Right cardiac atrium (tissue), 5 donors: ENCODE measurements at regions of chr17 and their contacts with region 1.

Region 1: GRCh38 chr17:55527540-55528118 is 16.4 kb upstream of the SMIM36 start:
- DNase-seq: peak in 2 of 3 donors; percentile 15 to 25
- ATAC-seq: peak; percentile 86 to 87
- H3K4me3 ChIP-seq: no peak overlapping the region
- H3K27ac ChIP-seq: no peak overlapping the region
- H3K4me1 ChIP-seq: no peaks in the 10 kb centered on the region
- H3K27me3 ChIP-seq: no peaks in the 10 kb centered on the region

Region 2: DNA sequence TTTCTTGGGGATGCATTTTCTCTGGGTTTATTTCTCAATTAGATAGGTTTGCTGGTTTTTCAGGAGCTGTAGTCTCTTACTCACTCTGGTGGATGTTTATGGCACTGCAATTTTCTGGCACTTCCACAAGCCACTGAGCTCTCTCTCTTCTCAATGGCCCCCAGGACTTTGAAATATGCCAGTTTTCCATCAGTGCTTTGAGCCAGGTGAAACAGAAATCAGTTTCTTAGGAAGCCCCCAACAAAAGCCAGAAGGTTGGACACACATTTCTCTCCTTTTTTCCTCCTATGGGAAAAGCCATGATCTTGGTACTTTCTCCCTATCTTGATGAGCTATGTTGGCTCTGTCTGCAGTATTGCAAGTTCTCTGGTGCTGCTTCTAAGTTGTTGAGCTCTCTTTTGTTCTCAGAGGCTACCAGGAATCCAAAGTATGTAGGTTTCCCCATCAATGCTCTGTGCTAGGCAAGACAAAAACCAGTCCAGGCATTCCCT is 74.3 kb after region 1 on chr17:
- intact Hi-C with region 1: loop called in 1 of 4 experiments (anchors 5 kb)
- DNase-seq: no peak
- ATAC-seq: no peak
- H3K4me3 ChIP-seq: no peak overlapping the region
- H3K27ac ChIP-seq: no peak overlapping the region
- H3K4me1 ChIP-seq: no peaks in the 10 kb centered on the region
- H3K27me3 ChIP-seq: no peaks in the 10 kb centered on the region

Region 3: GRCh38 chr17:55641676-55642081 is 114.0 kb after region 1 on chr17:
- intact Hi-C with region 1: loop called (anchors 2 to 5 kb)
- DNase-seq: peak; percentile 76 to 88 (median 79)
- ATAC-seq: peak; percentile 70 to 83
- H3K4me3 ChIP-seq: no peak overlapping the region
- H3K27ac ChIP-seq: no peak overlapping the region
- H3K4me1 ChIP-seq: peaks cover 5% of the 10 kb centered on the region
- H3K27me3 ChIP-seq: no peaks in the 10 kb centered on the region

Region 4: DNA sequence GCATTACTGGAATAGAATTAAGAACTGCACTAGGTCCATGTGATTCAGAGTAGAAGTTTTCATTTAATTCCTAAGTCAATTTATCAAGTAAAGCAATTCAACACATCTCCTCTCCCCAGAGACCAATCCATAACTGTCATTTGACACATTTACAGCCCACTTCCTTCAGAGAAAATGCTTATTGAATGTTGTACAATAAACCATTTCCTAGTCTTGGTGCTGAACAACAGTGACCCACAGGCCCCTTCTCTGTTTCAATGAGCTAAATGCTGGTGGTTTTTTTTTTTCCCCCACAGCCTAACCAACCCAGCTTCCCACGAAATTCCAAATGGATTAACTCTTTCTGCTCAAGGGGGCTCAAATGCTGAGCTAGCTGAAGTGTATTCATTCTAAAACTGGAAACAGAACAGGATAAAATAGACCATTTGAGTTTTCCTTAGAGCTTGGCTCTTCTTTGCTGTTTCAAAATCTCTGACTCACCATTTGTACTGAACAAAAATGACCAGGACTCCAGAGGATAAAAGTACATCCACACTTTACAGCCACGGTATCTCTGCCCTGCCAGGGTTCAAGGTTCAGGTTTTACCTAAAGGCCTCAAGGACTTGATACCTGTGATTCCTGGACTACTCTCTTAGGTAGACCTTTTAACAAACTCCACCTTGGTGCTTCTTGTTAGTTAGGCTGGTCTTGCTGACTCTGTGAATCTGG is 132.7 kb after region 1 on chr17:
- intact Hi-C with region 1: no loop called
- DNase-seq: no peak
- ATAC-seq: peak; percentile 50 to 68
- H3K4me3 ChIP-seq: no peak overlapping the region
- H3K27ac ChIP-seq: no peak overlapping the region
- H3K4me1 ChIP-seq: no peaks in the 10 kb centered on the region
- H3K27me3 ChIP-seq: no peaks in the 10 kb centered on the region

Region 5: GRCh38 chr17:55717898-55718735 is 190.5 kb after region 1 on chr17:
- intact Hi-C with region 1: loop called in 3 of 4 experiments (anchors 5 to 10 kb)
- DNase-seq: peak; percentile 79 to 92 (median 79)
- ATAC-seq: peak; percentile 38 to 48
- H3K4me3 ChIP-seq: no peak overlapping the region
- H3K27ac ChIP-seq: no peak overlapping the region
- H3K4me1 ChIP-seq: no peaks in the 10 kb centered on the region
- H3K27me3 ChIP-seq: no peaks in the 10 kb centered on the region

Region 6: GRCh38 chr17:55770148-55770870 is 242.7 kb after region 1 on chr17:
- intact Hi-C with region 1: loop called (anchors 2 to 5 kb)
- DNase-seq: no peak
- ATAC-seq: peak; percentile 73 to 81
- H3K4me3 ChIP-seq: no peak overlapping the region
- H3K27ac ChIP-seq: no peak overlapping the region
- H3K4me1 ChIP-seq: peaks cover 7% of the 10 kb centered on the region
- H3K27me3 ChIP-seq: no peaks in the 10 kb centered on the region